ENCODE measurements at regions of chr3 and their contacts with region 1.

Region 1: GRCh38 chr3:181899702-181900101 is 188.0 kb downstream of the SOX2 start:
- DNase-seq: no peak
- ATAC-seq: no peak
- H3K4me3 Mint-ChIP-seq: no peak overlapping the region
- H3K27ac Mint-ChIP-seq: peak overlapping the region; percentile 66; the same call in 1 of the 2 replicates
- H3K4me1 Mint-ChIP-seq: no peaks in the 10 kb centered on the region; the same call in 1 of the 2 replicates
- H3K27me3 Mint-ChIP-seq: no peaks in the 10 kb centered on the region
- CTCF ChIP-seq: no peak

Region 2: DNA sequence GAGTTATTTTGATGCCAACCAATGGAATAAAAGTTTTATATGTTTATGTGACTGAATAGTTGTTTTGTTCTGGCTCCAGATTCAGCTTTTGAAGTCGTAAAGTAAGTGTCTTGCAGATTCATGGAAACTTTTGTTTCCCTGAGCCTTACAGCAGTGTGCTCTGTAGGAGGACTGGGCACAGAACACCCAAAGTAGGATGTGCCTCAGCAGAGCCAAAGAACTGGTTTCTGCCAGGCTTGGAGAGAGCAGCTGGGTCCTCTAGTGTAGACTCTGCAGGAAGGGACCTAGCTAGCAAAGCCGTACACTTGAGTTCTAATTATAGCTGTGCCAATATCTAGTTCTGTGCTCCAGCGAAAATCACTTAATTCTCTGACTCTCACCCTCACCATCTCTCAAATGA is 649.0 kb before region 1 on chr3:
- CTCF ChIA-PET with region 1: no interaction called
- POLR2A ChIA-PET with region 1: interaction called, 14 read pairs
- DNase-seq: no peak
- ATAC-seq: peak; percentile 55
- H3K4me3 Mint-ChIP-seq: no peak overlapping the region
- H3K27ac Mint-ChIP-seq: no peak overlapping the region
- H3K4me1 Mint-ChIP-seq: peaks cover 25% of the 10 kb centered on the region
- H3K27me3 Mint-ChIP-seq: no peaks in the 10 kb centered on the region
- CTCF ChIP-seq: no peak

Region 3: GRCh38 chr3:181859518-181859917 is 40.2 kb before region 1 on chr3:
- CTCF ChIA-PET with region 1: no interaction called
- POLR2A ChIA-PET with region 1: no interaction called
- DNase-seq: peak; percentile 30
- ATAC-seq: peak; percentile 80
- H3K4me3 Mint-ChIP-seq: peak overlapping the region; percentile 42
- H3K27ac Mint-ChIP-seq: peak overlapping the region; percentile 97
- H3K4me1 Mint-ChIP-seq: peaks cover 50% of the 10 kb centered on the region
- H3K27me3 Mint-ChIP-seq: no peaks in the 10 kb centered on the region
- CTCF ChIP-seq: no peak